AG04449 (cell line): ENCODE measurements at regions of chr12 and their contacts with region 1.

Region 1: GRCh38 chr12:43921666-43922337 is 85.9 kb downstream of the TMEM117 start:
- DNase-seq: no peak
- H3K4me3 ChIP-seq: no peak overlapping the region
- CTCF ChIP-seq: no peak

Region 2: DNA sequence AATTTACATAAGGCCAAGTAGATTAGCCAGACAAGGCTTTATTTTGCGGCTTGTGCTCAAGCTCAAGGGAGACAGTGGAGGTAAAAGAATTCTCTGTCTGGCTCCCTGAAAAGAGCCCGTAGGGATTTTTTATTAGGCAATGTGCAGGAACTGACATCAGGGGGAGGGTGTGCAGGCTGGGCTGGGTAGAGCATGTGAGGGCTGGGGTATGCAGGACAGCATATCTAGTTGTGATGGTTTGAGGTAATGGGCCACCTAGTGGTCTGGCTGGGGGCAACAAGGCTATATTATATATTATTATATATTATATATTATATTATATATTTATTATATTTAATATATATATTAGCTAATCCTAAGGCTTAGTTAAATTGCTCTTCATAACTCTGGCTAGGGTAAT is 16.1 kb after region 1 on chr12:
- CTCF ChIA-PET with region 1: interaction called, 14 read pairs
- POLR2A ChIA-PET with region 1: no interaction called
- DNase-seq: no peak
- H3K4me3 ChIP-seq: no peak overlapping the region
- CTCF ChIP-seq: no peak

Region 3: GRCh38 chr12:44053550-44054243 is 131.9 kb after region 1 on chr12:
- CTCF ChIA-PET with region 1: no interaction called
- POLR2A ChIA-PET with region 1: no interaction called
- DNase-seq: peak; percentile 23
- H3K4me3 ChIP-seq: no peak overlapping the region
- CTCF ChIP-seq: no peak